OCI-LY7 (cell line): ENCODE measurements at regions of chr2 and their contacts with region 1.

Region 1: DNA sequence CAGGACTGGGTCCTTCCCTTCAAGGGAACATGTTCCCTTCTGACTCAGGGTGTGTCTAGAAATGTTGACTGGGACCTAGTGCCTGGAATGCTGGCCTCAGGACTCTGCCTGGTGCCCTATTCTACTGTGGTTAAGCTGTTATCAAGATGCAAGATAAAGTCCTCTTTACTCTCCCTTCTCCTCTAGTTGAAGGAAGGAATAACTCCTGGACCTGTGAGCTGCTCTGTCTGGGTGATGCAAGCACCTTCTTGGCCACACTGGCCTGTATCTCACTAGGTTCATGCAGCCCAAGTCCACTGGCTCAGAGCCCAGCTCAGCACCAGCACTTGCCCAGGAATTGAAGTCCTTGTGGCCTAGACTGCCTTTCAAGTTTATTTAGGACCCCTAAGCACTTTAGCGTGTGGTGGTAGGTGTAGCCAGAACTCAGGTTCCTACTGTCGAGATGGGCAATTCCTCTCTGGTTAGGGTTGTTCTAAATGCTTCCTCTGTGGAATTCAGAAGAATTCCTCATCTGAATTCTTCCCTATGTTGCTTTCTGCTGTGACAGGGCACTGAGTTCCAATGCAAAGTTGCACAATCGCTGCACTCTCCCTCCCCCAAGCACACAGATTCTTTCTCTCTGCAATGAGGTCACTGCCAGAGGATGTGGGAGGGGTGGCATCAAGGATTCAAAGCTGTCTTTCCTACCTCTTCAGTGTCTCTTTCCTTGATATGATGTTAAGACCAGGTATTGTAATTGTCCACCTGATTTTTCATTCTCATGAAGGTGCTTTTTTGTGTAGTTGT is 54.7 kb downstream of the VWC2L start:
- DNase-seq: no peak
- H3K4me3 ChIP-seq: no peak overlapping the region
- H3K27ac ChIP-seq: no peak overlapping the region
- H3K4me1 ChIP-seq: no peaks in the 10 kb centered on the region
- CTCF ChIP-seq: no peak

Region 2: DNA sequence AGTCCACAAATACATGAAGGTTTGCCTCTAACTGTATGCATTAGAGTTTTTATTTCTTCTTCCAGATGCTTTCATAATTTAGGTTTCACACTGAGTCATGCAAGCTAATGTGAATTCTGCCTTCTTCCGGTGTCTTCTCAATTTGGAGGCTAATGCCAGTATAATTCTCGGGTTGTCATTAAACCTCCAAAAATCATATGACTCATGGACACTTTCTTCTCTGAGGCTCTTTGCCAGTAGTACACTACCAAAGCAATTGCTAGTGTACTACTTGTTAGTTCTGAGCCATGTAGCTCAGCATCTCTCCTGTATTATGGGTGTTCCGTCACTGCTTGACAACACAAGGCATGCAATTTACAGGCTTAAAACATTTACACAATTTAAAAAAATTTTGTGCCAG is 82.4 kb after region 1 on chr2:
- CTCF ChIA-PET with region 1: no interaction called
- POLR2A ChIA-PET with region 1: interaction called, 10 read pairs
- intact Hi-C with region 1: no loop called
- DNase-seq: no peak
- H3K4me3 ChIP-seq: no peak overlapping the region
- H3K27ac ChIP-seq: no peak overlapping the region
- H3K4me1 ChIP-seq: no peaks in the 10 kb centered on the region
- CTCF ChIP-seq: no peak